GM12878 (cell line): ENCODE measurements at regions of chr15 and their contacts with region 1.

Region 1: GRCh38 chr15:90221246-90221900 is 12.4 kb downstream of the CIB1 start:
- DNase-seq: no peak
- ATAC-seq: peak; percentile 83
- H3K4me3 ChIP-seq: no peak overlapping the region
- H3K27ac ChIP-seq: no peak overlapping the region
- H3K4me1 ChIP-seq: peaks cover 2% of the 10 kb centered on the region; the same call in 1 of the 2 replicates
- H3K27me3 ChIP-seq: no peaks in the 10 kb centered on the region
- CTCF ChIP-seq: peak; percentile 66 to 82 (median 81)
- EP300 ChIP-seq: no peak
- POLR2A ChIP-seq: no peak
- RAD21 ChIP-seq: peak; percentile 82

Region 2: DNA sequence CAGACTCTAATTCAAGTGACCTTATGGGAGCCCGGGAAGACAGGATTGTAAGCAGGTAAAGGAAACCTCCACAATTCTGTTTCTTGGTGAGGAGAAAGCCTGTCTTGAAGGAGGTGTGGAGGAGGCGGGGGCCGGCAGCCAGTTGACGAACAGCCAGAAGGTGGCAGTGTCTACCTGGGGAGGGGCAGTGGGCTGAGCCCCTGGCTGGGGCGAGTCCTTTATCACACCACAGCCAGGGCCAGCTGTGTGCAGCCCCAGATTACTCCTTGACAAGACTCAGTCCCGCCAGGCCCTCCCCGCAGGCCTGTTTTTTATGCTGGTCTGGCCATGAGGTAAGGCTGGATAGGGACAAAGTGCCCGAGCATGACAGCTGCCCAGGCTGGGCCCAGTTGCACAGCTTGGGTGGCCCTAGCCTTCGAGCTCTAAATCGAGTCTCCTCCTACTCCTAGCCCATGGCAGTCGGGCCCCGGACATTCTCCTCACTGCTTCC is 78.2 kb before region 1 on chr15:
- CTCF ChIA-PET with region 1: interaction called, 40 read pairs
- POLR2A ChIA-PET with region 1: no interaction called
- RAD21 ChIA-PET with region 1: interaction called, 11 read pairs
- SMC1A ChIA-PET with region 1: interaction called, 11 read pairs
- in situ Hi-C with region 1: no loop called
- intact Hi-C with region 1: no loop called
- DNase-seq: no peak
- ATAC-seq: peak; percentile 97
- H3K4me3 ChIP-seq: no peak overlapping the region
- H3K27ac ChIP-seq: no peak overlapping the region
- H3K4me1 ChIP-seq: peaks cover 5% of the 10 kb centered on the region
- H3K27me3 ChIP-seq: no peaks in the 10 kb centered on the region
- CTCF ChIP-seq: peak; percentile 75 to 83 (median 83)
- EP300 ChIP-seq: no peak
- POLR2A ChIP-seq: no peak
- RAD21 ChIP-seq: peak; percentile 83

Region 3: DNA sequence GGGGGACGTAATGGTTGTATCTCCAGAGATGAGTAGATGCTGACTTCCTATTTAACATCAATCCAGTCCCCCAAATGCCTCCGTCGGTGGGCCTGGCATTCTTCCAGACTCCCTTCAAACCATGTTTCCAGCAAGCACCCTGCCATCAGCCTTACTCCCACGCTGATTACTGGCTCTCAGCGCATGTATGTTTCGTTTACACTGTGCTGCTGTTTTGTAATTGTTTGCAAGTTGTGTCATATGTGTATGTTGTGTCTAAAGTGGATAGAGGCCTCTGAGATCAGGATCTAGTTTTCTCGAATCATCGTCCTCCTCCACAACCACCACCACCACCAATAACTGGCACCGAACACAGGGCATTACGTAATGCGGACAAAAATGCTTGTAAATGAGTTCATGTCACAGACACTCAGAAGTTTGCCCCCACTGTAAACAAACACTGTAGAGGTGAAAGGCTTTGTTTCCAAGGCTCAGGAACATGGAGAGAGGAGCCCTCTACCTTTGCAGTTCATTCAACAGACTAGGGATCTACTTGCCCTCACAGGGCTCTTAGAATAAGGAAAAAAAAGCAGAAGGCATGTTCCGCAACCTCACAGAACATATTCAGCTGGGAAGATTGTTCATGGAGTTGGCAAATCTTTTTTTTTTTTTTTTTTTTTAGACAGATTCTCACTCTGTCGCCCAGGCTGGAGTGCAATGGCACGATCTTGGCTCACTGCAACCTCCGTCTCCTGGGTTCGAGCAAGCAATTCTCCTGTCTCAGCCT is 66.3 kb before region 1 on chr15:
- CTCF ChIA-PET with region 1: interaction called, 40 read pairs
- POLR2A ChIA-PET with region 1: interaction called, 3 read pairs
- RAD21 ChIA-PET with region 1: interaction called, 3 read pairs
- SMC1A ChIA-PET with region 1: interaction called, 5 read pairs
- in situ Hi-C with region 1: loop called (anchors 5 kb)
- intact Hi-C with region 1: no loop called
- DNase-seq: no peak
- ATAC-seq: no peak
- H3K4me3 ChIP-seq: no peak overlapping the region
- H3K27ac ChIP-seq: no peak overlapping the region
- H3K4me1 ChIP-seq: peaks cover 5% of the 10 kb centered on the region
- H3K27me3 ChIP-seq: no peaks in the 10 kb centered on the region
- CTCF ChIP-seq: no peak
- EP300 ChIP-seq: no peak
- POLR2A ChIP-seq: no peak
- RAD21 ChIP-seq: no peak

Region 4: DNA sequence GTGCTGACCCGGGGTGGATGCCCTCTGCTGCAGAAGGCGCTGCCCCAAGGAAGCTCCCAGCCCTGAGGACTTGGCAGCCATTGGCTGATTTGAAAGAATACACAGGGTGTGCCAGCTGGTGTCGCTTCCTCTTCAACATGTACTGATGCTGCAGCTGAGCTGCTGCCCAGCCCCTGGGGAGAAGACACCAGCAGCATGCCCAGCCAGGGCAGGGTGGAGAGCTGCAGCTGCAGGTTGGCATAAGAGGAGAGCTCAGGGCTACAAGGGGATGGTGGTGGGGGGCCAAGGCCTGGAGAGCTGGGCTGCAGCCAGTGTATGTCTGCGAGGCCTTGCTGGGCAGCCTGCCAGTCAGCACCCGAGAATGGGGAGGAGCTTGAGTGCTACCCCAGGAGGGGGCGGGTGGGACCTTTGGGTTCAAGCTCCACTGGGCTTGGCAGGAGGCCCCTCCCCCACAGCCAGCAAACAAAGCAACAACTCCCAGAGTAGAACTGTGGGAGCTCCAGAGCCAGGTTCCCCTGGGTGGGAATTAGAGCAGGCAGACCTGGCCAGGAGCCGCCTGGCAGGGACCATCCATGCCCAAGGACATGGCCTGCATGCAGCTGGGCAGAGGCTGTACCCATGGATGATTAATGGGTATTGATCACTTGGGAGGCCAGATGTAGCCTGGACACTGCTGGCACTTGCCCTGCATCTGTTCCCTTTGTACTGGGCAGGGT is 29.4 kb before region 1 on chr15:
- CTCF ChIA-PET with region 1: interaction called, 16 read pairs
- POLR2A ChIA-PET with region 1: interaction called, 6 read pairs
- RAD21 ChIA-PET with region 1: interaction called, 15 read pairs
- SMC1A ChIA-PET with region 1: interaction called, 10 read pairs
- in situ Hi-C with region 1: no loop called
- intact Hi-C with region 1: no loop called
- DNase-seq: peak; percentile 70
- ATAC-seq: peak; percentile 92
- H3K4me3 ChIP-seq: peak overlapping the region; percentile 57; the same call in 1 of the 2 replicates
- H3K27ac ChIP-seq: peak overlapping the region; percentile 65
- H3K4me1 ChIP-seq: peaks cover 41% of the 10 kb centered on the region
- H3K27me3 ChIP-seq: no peaks in the 10 kb centered on the region
- CTCF ChIP-seq: no peak
- EP300 ChIP-seq: no peak
- POLR2A ChIP-seq: peak; percentile 61
- RAD21 ChIP-seq: no peak

Region 5: GRCh38 chr15:90201130-90201949 is 20.0 kb before region 1 on chr15 and contains the start of gene SEMA4B:
- CTCF ChIA-PET with region 1: interaction called, 11 read pairs
- POLR2A ChIA-PET with region 1: interaction called, 13 read pairs
- RAD21 ChIA-PET with region 1: interaction called, 12 read pairs
- SMC1A ChIA-PET with region 1: interaction called, 20 read pairs
- in situ Hi-C with region 1: no loop called
- intact Hi-C with region 1: no loop called
- DNase-seq: no peak
- ATAC-seq: peak; percentile 94
- H3K4me3 ChIP-seq: peak within 1 kb of the TSS; percentile 95
- H3K27ac ChIP-seq: peak within 1 kb of the TSS; percentile 37; the same call in 1 of the 2 replicates
- H3K4me1 ChIP-seq: peaks cover 14% of the 10 kb centered on the region
- H3K27me3 ChIP-seq: no peaks in the 10 kb centered on the region
- CTCF ChIP-seq: no peak
- EP300 ChIP-seq: no peak
- POLR2A ChIP-seq: peak; percentile 80
- RAD21 ChIP-seq: no peak
- polyA plus RNA-seq, gene SEMA4B: 0.87 to 1.4 TPM

Region 6: DNA sequence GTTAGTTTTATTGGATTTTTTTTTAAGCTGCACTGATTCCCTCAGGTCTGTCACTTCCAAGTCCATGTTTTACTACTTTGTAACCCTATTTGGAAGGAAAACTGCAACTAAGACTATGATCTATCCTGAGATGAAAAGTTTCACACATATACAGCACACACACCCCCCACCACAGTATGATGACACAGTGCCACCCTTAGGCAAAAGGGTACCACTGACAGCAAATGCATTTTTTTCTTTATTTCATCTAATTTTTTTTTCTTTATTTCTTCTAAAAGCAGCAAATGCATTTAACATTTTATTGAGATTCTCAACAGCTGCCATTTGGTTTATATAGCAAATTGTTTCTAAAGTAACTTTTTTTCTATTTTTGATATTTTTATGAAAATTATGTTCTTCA is 65.3 kb after region 1 on chr15:
- CTCF ChIA-PET with region 1: interaction called, 11 read pairs
- POLR2A ChIA-PET with region 1: interaction called, 4 read pairs
- RAD21 ChIA-PET with region 1: interaction called, 7 read pairs
- SMC1A ChIA-PET with region 1: interaction called, 5 read pairs
- in situ Hi-C with region 1: no loop called
- intact Hi-C with region 1: no loop called
- DNase-seq: no peak
- ATAC-seq: peak; percentile 92
- H3K4me3 ChIP-seq: no peak overlapping the region
- H3K27ac ChIP-seq: no peak overlapping the region
- H3K4me1 ChIP-seq: no peaks in the 10 kb centered on the region
- H3K27me3 ChIP-seq: no peaks in the 10 kb centered on the region
- CTCF ChIP-seq: peak; percentile 54 to 80 (median 61); a peak in 5 of 6 replicates
- EP300 ChIP-seq: no peak
- POLR2A ChIP-seq: no peak
- RAD21 ChIP-seq: peak; percentile 90

Region 7: GRCh38 chr15:90300988-90301706 is 79.8 kb after region 1 on chr15:
- CTCF ChIA-PET with region 1: interaction called, 10 read pairs
- POLR2A ChIA-PET with region 1: interaction called, 6 read pairs
- RAD21 ChIA-PET with region 1: no interaction called
- SMC1A ChIA-PET with region 1: no interaction called
- in situ Hi-C with region 1: no loop called
- intact Hi-C with region 1: no loop called
- DNase-seq: no peak
- ATAC-seq: peak; percentile 86
- H3K4me3 ChIP-seq: no peak overlapping the region
- H3K27ac ChIP-seq: no peak overlapping the region
- H3K4me1 ChIP-seq: peaks cover 14% of the 10 kb centered on the region; the same call in 1 of the 2 replicates
- H3K27me3 ChIP-seq: no peaks in the 10 kb centered on the region
- CTCF ChIP-seq: peak; percentile 63 to 92 (median 90)
- EP300 ChIP-seq: no peak
- POLR2A ChIP-seq: no peak
- RAD21 ChIP-seq: peak; percentile 24; the same call in 1 of the 2 replicates

Region 8: GRCh38 chr15:90334304-90334731 is 112.9 kb after region 1 on chr15:
- CTCF ChIA-PET with region 1: no interaction called
- POLR2A ChIA-PET with region 1: no interaction called
- RAD21 ChIA-PET with region 1: no interaction called
- SMC1A ChIA-PET with region 1: no interaction called
- in situ Hi-C with region 1: no loop called
- intact Hi-C with region 1: no loop called
- DNase-seq: no peak
- ATAC-seq: no peak
- H3K4me3 ChIP-seq: no peak overlapping the region
- H3K27ac ChIP-seq: no peak overlapping the region
- H3K4me1 ChIP-seq: peaks cover 5% of the 10 kb centered on the region; the same call in 1 of the 2 replicates
- H3K27me3 ChIP-seq: no peaks in the 10 kb centered on the region
- CTCF ChIP-seq: no peak
- EP300 ChIP-seq: no peak
- POLR2A ChIP-seq: no peak
- RAD21 ChIP-seq: no peak

Region 9: DNA sequence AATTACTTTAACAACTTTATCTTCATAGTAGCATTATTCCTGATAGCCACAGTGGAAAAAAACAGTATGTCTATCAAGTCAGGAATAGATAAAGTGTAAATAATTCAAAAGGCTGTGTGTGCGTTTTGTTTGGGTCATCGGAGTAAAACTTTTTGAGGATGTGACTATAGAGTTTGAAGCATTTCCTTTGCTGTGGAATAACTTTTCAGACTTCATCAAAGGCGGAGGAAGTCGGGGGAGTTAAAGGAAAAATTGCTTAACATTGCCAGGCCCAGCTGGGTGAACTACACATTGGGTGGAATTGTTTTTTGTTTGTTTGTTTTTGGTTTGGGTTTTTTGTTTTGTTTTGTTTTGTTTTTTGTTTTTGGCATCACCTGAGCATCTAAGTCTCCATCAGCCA is 238.0 kb after region 1 on chr15:
- CTCF ChIA-PET with region 1: no interaction called
- POLR2A ChIA-PET with region 1: no interaction called
- RAD21 ChIA-PET with region 1: no interaction called
- SMC1A ChIA-PET with region 1: no interaction called
- in situ Hi-C with region 1: no loop called
- intact Hi-C with region 1: no loop called
- DNase-seq: no peak
- ATAC-seq: no peak
- H3K4me3 ChIP-seq: no peak overlapping the region
- H3K27ac ChIP-seq: no peak overlapping the region
- H3K4me1 ChIP-seq: peaks cover 3% of the 10 kb centered on the region; the same call in 1 of the 2 replicates
- H3K27me3 ChIP-seq: no peaks in the 10 kb centered on the region
- CTCF ChIP-seq: no peak
- EP300 ChIP-seq: no peak
- POLR2A ChIP-seq: no peak
- RAD21 ChIP-seq: no peak